SK-N-SH (cell line): ENCODE measurements at regions of chr1 and their contacts with region 1.

Region 1: GRCh38 chr1:160006312-160006940 is 25.4 kb downstream of the PIGM start:
- DNase-seq: peak; percentile 73
- H3K4me3 ChIP-seq: no peak overlapping the region; a peak in 1 of 4 replicates
- H3K27ac ChIP-seq: no peak overlapping the region
- H3K4me1 ChIP-seq: no peaks in the 10 kb centered on the region
- H3K27me3 ChIP-seq: peaks cover 8% of the 10 kb centered on the region; the same call in 1 of the 2 replicates
- CTCF ChIP-seq: peak; percentile 98
- EP300 ChIP-seq: no peak
- RAD21 ChIP-seq: peak; percentile 66

Region 2: GRCh38 chr1:159804924-159805323 is 201.5 kb before region 1 on chr1:
- CTCF ChIA-PET with region 1: interaction called, 39 read pairs
- POLR2A ChIA-PET with region 1: no interaction called
- DNase-seq: no peak
- H3K4me3 ChIP-seq: no peak overlapping the region
- H3K27ac ChIP-seq: no peak overlapping the region
- H3K4me1 ChIP-seq: no peaks in the 10 kb centered on the region; a peak in 1 of 4 replicates
- H3K27me3 ChIP-seq: no peaks in the 10 kb centered on the region
- CTCF ChIP-seq: no peak
- EP300 ChIP-seq: 0 out of 4 replicates have a peak, but pooled peaks of 1 of the 2 experiments have one; percentile 10
- RAD21 ChIP-seq: no peak

Region 3: DNA sequence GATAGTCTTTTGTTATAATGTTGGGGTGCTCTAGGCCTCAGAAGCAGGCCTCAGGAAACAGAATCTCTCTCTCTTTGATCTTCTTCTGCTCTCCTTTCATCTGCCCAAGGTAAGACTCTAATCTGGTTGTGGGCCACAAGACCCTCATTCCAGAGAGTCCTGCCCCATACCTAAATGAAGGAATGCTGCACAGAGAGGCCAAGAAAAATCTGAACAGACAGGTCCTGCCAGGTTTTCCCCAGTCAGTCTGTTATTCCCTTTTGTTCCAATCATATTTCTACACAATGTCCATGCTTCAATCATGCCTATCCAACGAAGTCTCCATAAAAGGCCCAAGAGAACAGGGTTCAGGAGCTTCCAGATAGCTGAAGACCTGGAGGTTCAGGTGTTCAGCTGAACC is 99.5 kb before region 1 on chr1:
- CTCF ChIA-PET with region 1: interaction called, 18 read pairs
- POLR2A ChIA-PET with region 1: no interaction called
- DNase-seq: no peak
- H3K4me3 ChIP-seq: no peak overlapping the region
- H3K27ac ChIP-seq: no peak overlapping the region
- H3K4me1 ChIP-seq: peaks cover 12 to 25% of the 10 kb centered on the region in 2 experiments; a peak in 3 of 4 replicates
- H3K27me3 ChIP-seq: no peaks in the 10 kb centered on the region
- CTCF ChIP-seq: no peak
- EP300 ChIP-seq: no peak
- RAD21 ChIP-seq: no peak

Region 4: DNA sequence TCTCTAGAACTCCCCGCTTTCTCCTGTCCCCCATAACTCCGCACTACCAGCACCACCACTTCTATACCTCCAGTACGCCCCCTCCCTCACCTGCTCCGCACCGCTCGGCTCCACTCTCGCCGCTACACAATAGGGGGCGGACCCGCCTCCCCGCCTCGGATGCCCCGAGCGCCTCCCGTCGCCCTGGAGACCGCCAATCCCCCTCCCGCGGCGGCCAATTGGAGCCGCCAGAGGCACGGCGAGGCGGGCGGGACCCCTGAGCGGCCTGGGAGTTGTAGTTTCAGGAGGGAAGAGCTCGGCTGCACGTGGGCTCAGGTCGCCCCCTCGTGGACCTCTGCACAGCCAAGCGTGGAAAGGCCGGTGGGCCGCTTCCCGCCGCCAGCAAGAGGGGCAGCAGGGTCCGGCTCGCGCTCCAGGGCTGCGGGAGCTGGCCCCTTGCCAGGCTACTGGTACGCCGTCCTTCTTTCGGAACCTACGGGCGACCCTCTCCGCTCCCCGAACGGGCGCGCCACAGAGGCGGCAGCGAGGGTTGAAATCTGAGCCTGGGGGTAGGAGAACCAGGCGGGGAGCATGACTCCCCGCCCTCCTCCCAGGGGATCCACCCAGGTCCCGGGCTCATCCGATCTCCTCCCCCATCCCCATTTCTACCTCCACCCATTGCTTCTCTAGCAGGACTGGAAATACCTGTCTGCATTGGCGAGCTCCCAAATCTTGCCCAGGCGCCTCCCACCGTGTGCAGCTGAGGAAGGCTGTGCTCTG is 60.8 kb before region 1 on chr1 and contains the start of gene IGSF9:
- CTCF ChIA-PET with region 1: interaction called, 460 read pairs
- POLR2A ChIA-PET with region 1: interaction called, 3 read pairs
- DNase-seq: peak; percentile 95
- H3K4me3 ChIP-seq: peak within 1 kb of the TSS; percentile 68 to 72
- H3K27ac ChIP-seq: no peak within 1 kb of the TSS; a peak in 1 of 4 replicates
- H3K4me1 ChIP-seq: peaks cover 0 to 36% of the 10 kb centered on the region in 2 experiments; a peak in 1 of 4 replicates
- H3K27me3 ChIP-seq: no peaks in the 10 kb centered on the region; the same call in 1 of the 2 replicates
- CTCF ChIP-seq: peak; percentile 66
- EP300 ChIP-seq: no peak
- RAD21 ChIP-seq: peak; percentile 61
- polyA plus RNA-seq, gene IGSF9: 0.86 and 2.4 TPM in 2 replicates

Region 5: DNA sequence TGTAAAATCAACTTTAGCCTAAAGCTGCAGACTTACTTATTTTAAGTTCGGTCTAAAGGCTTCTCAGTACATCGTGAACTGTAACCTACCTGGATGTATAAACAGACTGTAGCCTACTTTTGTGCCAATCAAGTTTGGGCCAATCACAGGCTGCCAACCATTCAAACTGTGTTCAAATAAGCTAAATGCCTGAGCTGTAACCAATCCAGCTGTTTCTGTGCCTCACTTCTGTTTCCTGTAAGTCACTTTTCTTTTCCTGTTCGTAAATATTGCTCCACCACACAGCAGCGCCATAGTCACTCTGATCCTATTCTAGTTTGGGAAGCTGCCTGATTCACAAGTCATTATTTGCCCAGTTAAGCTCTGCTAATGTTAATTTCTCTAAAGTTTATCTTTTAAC is 14.9 kb before region 1 on chr1:
- CTCF ChIA-PET with region 1: interaction called, 65 read pairs
- POLR2A ChIA-PET with region 1: no interaction called
- DNase-seq: no peak
- H3K4me3 ChIP-seq: no peak overlapping the region
- H3K27ac ChIP-seq: no peak overlapping the region
- H3K4me1 ChIP-seq: no peaks in the 10 kb centered on the region
- H3K27me3 ChIP-seq: no peaks in the 10 kb centered on the region
- CTCF ChIP-seq: no peak
- EP300 ChIP-seq: no peak
- RAD21 ChIP-seq: no peak

Region 6: DNA sequence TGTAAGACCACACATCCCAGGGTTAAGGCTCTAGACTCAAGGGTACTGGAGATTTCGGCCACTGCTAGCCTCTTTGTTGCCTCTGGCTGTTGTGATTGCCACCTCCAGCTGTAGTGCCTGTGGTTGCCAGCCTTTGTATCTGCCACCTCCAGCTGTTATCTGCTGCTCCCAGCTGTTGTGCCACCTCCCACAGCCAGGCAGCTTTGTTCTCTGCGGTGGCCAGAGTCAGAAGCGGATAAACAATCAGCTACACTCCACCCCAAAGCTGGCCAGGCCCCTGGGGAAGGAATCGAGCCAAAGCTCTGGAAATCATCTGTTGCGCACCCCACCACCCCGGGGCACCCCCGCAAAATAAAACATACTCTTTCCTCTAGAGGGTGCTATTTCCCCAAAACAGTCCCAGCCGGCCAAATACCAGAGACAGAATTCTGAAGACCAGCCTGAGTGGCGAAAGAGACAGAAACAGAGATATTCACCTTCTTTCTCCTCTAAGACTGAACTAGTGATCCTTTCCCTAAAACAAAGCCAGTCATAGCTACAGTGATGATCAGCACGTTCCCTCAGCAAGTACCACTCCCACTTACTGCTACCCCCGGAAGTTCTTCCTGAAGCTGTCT is 40.2 kb after region 1 on chr1:
- CTCF ChIA-PET with region 1: interaction called, 21 read pairs
- POLR2A ChIA-PET with region 1: no interaction called
- DNase-seq: peak; percentile 80
- H3K4me3 ChIP-seq: no peak overlapping the region
- H3K27ac ChIP-seq: no peak overlapping the region
- H3K4me1 ChIP-seq: peaks cover 0 to 11% of the 10 kb centered on the region in 2 experiments; a peak in 2 of 4 replicates
- H3K27me3 ChIP-seq: peaks cover 30% of the 10 kb centered on the region; the same call in 1 of the 2 replicates
- CTCF ChIP-seq: peak; percentile 67
- EP300 ChIP-seq: peak in 1 of 2 experiments; percentile 27; a peak in 1 of 4 replicates
- RAD21 ChIP-seq: peak; percentile 77

Region 7: DNA sequence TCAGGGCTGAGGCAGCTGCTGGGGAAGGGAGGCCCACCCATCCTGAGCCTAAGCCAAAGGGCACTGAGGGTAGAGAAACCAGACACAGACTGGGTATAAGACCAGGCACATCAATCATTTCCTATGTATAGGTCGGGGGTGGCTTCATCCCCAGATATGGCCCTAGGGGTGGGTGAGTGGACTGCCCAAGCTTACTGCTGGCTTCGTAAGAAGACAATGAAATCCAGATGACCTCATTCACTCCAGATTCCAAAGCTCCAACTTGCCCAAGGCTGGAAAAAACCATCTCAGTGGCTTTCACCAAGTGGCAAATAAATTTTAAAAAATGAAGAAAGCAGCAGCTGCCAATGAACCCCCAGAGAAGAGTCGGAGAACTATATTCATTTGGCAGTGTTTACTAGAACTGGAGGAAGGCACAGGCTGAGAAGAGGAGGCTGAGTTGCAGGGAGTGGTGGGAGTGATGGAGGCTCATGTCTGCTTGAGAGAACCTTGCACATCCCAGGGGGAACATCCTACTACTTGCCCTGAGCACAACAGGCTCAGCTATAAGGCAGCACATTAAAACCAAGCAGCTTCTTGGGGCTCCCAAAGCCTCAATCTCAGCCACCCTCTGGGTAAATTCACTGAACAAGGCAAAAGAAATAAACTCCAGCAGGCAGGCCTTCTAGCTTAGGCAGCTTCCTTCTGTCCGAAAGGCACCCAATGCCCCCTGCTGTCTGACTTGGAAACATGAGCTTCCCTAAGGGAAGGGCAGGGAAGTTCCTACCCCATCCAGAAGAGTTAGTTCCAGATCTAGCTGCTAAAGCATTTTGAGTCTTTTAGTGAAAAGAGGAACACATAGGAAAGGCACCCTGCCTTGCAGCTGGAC is 212.9 kb after region 1 on chr1:
- CTCF ChIA-PET with region 1: no interaction called
- POLR2A ChIA-PET with region 1: no interaction called
- DNase-seq: peak; percentile 55
- H3K4me3 ChIP-seq: no peak overlapping the region; a peak in 1 of 4 replicates
- H3K27ac ChIP-seq: peak overlapping the region; percentile 31 to 55
- H3K4me1 ChIP-seq: peaks cover 11 to 18% of the 10 kb centered on the region in 2 experiments; a peak in 3 of 4 replicates
- H3K27me3 ChIP-seq: no peaks in the 10 kb centered on the region
- CTCF ChIP-seq: peak; percentile 72
- EP300 ChIP-seq: no peak
- RAD21 ChIP-seq: peak; percentile 81

Region 8: GRCh38 chr1:160342953-160343869 is 336.8 kb after region 1 on chr1 and contains the starts of genes COPA and NCSTN:
- CTCF ChIA-PET with region 1: no interaction called
- POLR2A ChIA-PET with region 1: no interaction called
- DNase-seq: peak; percentile 90
- H3K4me3 ChIP-seq: peak within 1 kb of the TSS; percentile 94 to 98
- H3K27ac ChIP-seq: peak within 1 kb of the TSS; percentile 89
- H3K4me1 ChIP-seq: peaks cover 5 to 15% of the 10 kb centered on the region in 2 experiments; a peak in 2 of 4 replicates
- H3K27me3 ChIP-seq: no peaks in the 10 kb centered on the region
- CTCF ChIP-seq: no peak
- EP300 ChIP-seq: 0 out of 4 replicates have a peak, but pooled peaks of 1 of the 2 experiments have one; percentile 23
- RAD21 ChIP-seq: no peak
- polyA plus RNA-seq, gene COPA: 91.4 and 122 TPM in 2 replicates
- polyA plus RNA-seq, gene NCSTN: 165 and 226 TPM in 2 replicates